Posterior cingulate gyrus (tissue), 11 donors: ENCODE measurements at regions of chr16 and their contacts with region 1.

Region 1: GRCh38 chr16:58025351-58026138 is at the start of gene MMP15:
- DNase-seq: peak in 9 of 10 donors; percentile 28 to 94 (median 62)

Region 2: GRCh38 chr16:58121132-58121531 is 95.6 kb after region 1 on chr16:
- intact Hi-C with region 1: loop called (anchors 2 kb)
- DNase-seq: no peak

Region 3: DNA sequence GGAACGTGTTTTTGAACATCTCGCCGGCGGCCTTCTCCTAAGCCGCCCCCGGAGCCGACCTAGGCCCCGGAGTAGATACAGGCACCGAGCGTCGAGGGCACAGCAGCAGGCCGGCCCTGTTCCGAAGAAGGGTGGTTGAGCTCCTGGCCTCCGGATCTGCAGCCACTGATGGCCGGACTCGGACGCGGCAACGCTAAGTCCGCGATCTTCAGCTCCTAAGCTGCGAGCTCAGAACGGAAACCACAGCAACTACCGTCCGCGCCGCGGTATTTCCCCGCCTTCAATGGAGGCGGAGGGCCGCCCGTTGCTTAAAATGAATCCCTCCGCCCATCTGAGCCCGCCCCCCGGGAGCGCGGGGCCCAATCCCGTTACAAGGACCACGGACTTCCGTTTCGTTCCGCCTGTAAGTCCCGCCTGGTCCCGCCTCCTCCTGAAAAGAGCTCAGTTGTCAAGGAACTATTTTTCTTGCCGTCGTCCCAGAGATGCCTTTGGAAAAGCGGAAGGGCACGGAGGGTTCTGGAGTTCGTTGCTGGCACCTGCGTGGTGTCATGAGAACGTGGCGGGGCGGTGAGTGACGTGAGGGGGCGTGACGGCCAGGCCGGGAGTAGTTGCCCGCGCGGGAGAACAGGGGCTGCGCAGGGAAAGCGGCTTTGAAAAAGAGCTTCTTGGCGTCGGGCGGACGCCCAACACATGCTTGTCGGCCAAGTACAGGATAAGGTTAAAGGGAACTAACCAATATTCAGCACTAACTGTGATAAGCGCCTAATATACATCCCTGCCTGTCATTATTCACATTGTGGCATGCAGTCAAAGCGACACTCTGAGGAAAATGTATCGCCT is 103.8 kb after region 1 on chr16 and contains the start of gene CFAP20:
- intact Hi-C with region 1: loop called (anchors 2 kb)
- DNase-seq: peak; percentile 95 to 100 (median 97)

Region 4: DNA sequence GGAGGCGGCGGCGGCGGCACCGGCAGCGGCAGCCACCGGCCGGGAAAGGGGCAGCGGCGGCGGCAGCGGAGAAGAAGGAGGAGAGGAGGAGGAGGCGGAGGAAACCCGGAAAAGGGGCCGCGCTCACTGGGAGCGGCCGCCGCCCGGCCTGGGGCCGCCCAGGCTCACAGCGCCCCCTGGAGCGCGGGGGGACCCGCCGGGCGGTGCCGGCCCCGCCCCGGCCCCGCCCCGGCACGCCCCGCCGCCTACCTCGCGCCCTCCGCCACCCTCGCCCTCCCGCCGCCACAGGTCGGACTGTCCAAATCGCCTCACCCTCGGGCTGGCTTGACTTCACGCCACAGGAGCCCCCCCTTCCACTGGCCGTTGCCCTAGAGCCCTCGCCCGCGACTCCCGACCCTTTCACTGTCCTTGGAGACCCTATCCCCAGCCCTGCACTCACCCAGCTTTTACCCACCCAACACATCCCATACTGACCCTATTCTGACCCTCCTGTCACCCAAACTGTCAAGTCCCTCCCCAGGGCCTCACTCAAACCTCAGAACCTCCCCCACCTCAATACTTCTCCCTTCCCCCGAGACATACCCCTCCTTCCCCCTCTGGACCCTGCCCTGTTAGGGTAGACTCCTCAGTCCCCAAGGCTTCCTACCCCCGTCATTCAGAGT is 172.6 kb after region 1 on chr16 and contains the start of gene CSNK2A2:
- intact Hi-C with region 1: loop called (anchors 1 kb)
- DNase-seq: peak; percentile 38 to 93 (median 60)

Region 5: DNA sequence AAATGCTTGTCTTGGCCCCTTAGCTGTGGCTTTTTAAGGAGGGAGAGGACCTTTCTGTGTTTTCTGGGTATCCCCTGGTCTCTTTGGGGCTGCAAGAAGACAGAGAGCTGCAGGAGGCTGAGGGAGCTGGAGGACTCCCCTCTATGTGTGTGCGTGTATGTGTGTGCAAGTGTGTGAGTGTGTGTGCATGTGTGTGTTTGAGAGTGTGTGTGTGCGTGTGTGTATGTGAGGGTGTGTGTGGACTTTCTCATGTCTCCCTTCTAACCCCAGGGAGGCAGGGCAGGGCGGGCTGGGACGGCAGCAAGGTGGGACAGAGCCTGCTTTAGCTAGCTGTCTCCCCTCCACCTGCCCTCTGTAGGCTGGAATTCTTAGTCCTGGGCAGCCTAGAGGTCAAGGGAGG is 267.3 kb after region 1 on chr16:
- intact Hi-C with region 1: no loop called
- DNase-seq: no peak

Region 6: DNA sequence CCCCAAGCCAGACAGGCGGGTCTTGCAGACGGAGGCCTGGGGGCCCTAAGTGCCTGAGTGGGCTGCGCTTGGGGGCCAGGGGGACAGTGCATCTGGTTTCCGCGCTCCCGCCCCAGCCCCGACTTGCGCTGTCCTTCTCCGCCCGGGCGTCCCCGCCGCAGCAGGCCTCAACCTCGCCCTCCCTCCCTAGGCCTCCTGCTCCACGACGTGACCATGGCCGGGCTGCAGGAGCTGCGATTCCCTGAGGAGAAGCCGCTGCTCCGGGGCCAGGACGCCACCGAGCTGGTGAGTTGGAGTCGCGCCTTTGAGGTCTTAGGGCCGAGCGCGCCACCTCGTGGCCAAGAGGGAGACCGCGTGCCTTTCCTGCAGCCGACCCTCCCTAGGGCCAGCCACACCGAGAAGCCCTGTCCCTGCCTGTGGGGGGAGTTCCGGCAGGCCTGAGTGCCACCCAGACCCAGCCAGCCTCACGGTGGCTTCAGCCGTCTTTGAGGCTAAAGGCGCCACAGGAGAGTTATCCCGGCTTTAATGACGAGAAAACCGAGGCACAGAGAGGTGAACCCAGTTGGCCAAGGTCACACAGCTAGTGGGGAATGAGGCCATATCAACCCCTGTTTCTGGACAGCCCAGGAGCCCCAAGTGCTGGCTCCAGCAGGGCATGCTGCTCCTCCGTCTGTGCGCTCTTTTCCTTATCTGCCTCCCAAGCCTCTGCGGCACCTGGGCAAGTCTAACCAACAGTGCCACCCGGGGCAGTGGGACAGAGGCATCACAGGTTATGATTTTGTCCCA is 462.2 kb after region 1 on chr16:
- intact Hi-C with region 1: loop called (anchors 10 kb)
- DNase-seq: peak; percentile 76 to 98 (median 86)